Activated CD4-positive, alpha-beta T cell treated with anti-CD3 and anti-CD28 coated beads for 36 hours (primary cell): ENCODE measurements at regions of chr19 and their contacts with region 1.

Region 1: GRCh38 chr19:18152444-18152816 is 533 bp upstream of the PIK3R2 start:
- DNase-seq: peak; percentile 100
- ATAC-seq: peak; percentile 79
- H3K4me3 Mint-ChIP-seq: peak overlapping the region; percentile 84
- H3K27ac Mint-ChIP-seq: peak overlapping the region; percentile 98
- H3K4me1 Mint-ChIP-seq: peaks cover 23% of the 10 kb centered on the region
- H3K27me3 Mint-ChIP-seq: no peaks in the 10 kb centered on the region

Region 2: GRCh38 chr19:17932485-17933338 is 219.7 kb before region 1 on chr19 and contains the start of gene CCDC124:
- CTCF ChIA-PET with region 1: interaction called, 6 read pairs
- POLR2A ChIA-PET with region 1: interaction called, 3 read pairs
- intact Hi-C with region 1: loop called in 1 of 2 experiments (anchors 1 kb)
- DNase-seq: peak; percentile 96
- ATAC-seq: peak; percentile 98
- H3K4me3 Mint-ChIP-seq: peak within 1 kb of the TSS; percentile 88
- H3K27ac Mint-ChIP-seq: peak within 1 kb of the TSS; percentile 92
- H3K4me1 Mint-ChIP-seq: peaks cover 18% of the 10 kb centered on the region
- H3K27me3 Mint-ChIP-seq: no peaks in the 10 kb centered on the region
- total RNA-seq, gene CCDC124: 99.3 to 131 TPM

Region 3: GRCh38 chr19:18007044-18007916 is 145.2 kb before region 1 on chr19:
- CTCF ChIA-PET with region 1: interaction called, 3 read pairs
- POLR2A ChIA-PET with region 1: no interaction called
- intact Hi-C with region 1: loop called (anchors 1 to 10 kb)
- DNase-seq: peak; percentile 89
- ATAC-seq: peak; percentile 72
- H3K4me3 Mint-ChIP-seq: peak overlapping the region; percentile 73
- H3K27ac Mint-ChIP-seq: peak overlapping the region; percentile 81
- H3K4me1 Mint-ChIP-seq: peaks cover 31% of the 10 kb centered on the region
- H3K27me3 Mint-ChIP-seq: no peaks in the 10 kb centered on the region

Region 4: GRCh38 chr19:18068395-18068794 is 84.0 kb before region 1 on chr19:
- CTCF ChIA-PET with region 1: no interaction called
- POLR2A ChIA-PET with region 1: no interaction called
- intact Hi-C with region 1: no loop called
- DNase-seq: no peak
- ATAC-seq: no peak
- H3K4me3 Mint-ChIP-seq: no peak overlapping the region
- H3K27ac Mint-ChIP-seq: no peak overlapping the region
- H3K4me1 Mint-ChIP-seq: peaks cover 5% of the 10 kb centered on the region
- H3K27me3 Mint-ChIP-seq: no peaks in the 10 kb centered on the region

Region 5: GRCh38 chr19:18117692-18118378 is 34.6 kb before region 1 on chr19:
- CTCF ChIA-PET with region 1: interaction called, 8 read pairs
- POLR2A ChIA-PET with region 1: no interaction called
- intact Hi-C with region 1: loop called (anchors 1 to 2 kb)
- DNase-seq: peak; percentile 97
- ATAC-seq: peak; percentile 79
- H3K4me3 Mint-ChIP-seq: peak overlapping the region; percentile 74
- H3K27ac Mint-ChIP-seq: peak overlapping the region; percentile 84
- H3K4me1 Mint-ChIP-seq: peaks cover 35% of the 10 kb centered on the region
- H3K27me3 Mint-ChIP-seq: no peaks in the 10 kb centered on the region

Region 6: GRCh38 chr19:18192673-18193387 is 40.4 kb after region 1 on chr19 and contains the start of gene MPV17L2:
- CTCF ChIA-PET with region 1: no interaction called
- POLR2A ChIA-PET with region 1: no interaction called
- intact Hi-C with region 1: loop called (anchors 1 kb)
- DNase-seq: peak; percentile 99
- ATAC-seq: peak; percentile 95
- H3K4me3 Mint-ChIP-seq: peak within 1 kb of the TSS; percentile 79
- H3K27ac Mint-ChIP-seq: peak within 1 kb of the TSS; percentile 91
- H3K4me1 Mint-ChIP-seq: peaks cover 22% of the 10 kb centered on the region
- H3K27me3 Mint-ChIP-seq: no peaks in the 10 kb centered on the region
- total RNA-seq, gene MPV17L2: 5.7 to 6.2 TPM

Region 7: GRCh38 chr19:18322759-18323460 is 170.5 kb after region 1 on chr19 and contains the start of gene LSM4:
- CTCF ChIA-PET with region 1: interaction called, 5 read pairs
- POLR2A ChIA-PET with region 1: no interaction called
- intact Hi-C with region 1: loop called in 1 of 2 experiments (anchors 1 kb)
- DNase-seq: peak; percentile 100
- ATAC-seq: peak; percentile 94
- H3K4me3 Mint-ChIP-seq: peak within 1 kb of the TSS; percentile 90
- H3K27ac Mint-ChIP-seq: peak within 1 kb of the TSS; percentile 98
- H3K4me1 Mint-ChIP-seq: peaks cover 54% of the 10 kb centered on the region
- H3K27me3 Mint-ChIP-seq: no peaks in the 10 kb centered on the region
- total RNA-seq, gene LSM4: 269 to 370 TPM